Common myeloid progenitor, CD34-positive (primary cell): ENCODE measurements at regions of chr9 and their contacts with region 1.

Region 1: GRCh38 chr9:121023064-121023463 is 27.0 kb downstream of the C5 start:
- DNase-seq: peak; percentile 8 to 12 (median 11)
- H3K4me3 ChIP-seq: no peak overlapping the region
- H3K27ac ChIP-seq: no peak overlapping the region
- H3K4me1 ChIP-seq: no peaks in the 10 kb centered on the region
- H3K27me3 ChIP-seq: no peaks in the 10 kb centered on the region

Region 2: GRCh38 chr9:121038804-121039203 is 15.7 kb after region 1 on chr9:
- CTCF ChIA-PET with region 1: interaction called, 12 read pairs
- POLR2A ChIA-PET with region 1: no interaction called
- DNase-seq: no peak
- H3K4me3 ChIP-seq: no peak overlapping the region
- H3K27ac ChIP-seq: no peak overlapping the region
- H3K4me1 ChIP-seq: no peaks in the 10 kb centered on the region
- H3K27me3 ChIP-seq: no peaks in the 10 kb centered on the region

Region 3: DNA sequence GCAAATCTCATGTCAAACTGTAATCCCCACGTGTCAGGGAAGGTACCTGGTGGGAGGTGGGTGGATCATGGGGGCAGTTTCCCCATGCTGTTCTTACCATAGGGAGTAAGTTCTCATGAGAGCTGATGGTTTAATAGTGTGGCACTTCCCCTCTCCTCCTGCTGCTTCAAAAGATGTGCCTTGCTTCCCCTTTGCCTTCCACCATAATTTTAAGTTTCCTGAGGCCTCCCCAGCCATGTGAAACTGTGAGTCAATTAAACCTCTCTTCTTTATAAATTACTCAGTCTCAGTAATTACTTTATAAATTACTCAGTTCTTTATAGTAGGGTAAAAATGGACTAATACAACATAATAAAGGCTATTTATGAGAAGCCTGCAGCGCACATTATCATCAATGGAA is 44.6 kb after region 1 on chr9:
- CTCF ChIA-PET with region 1: no interaction called
- POLR2A ChIA-PET with region 1: no interaction called
- DNase-seq: no peak
- H3K4me3 ChIP-seq: no peak overlapping the region
- H3K27ac ChIP-seq: no peak overlapping the region
- H3K4me1 ChIP-seq: peaks cover 2 to 18% (median 8%) of the 10 kb centered on the region in 4 experiments
- H3K27me3 ChIP-seq: no peaks in the 10 kb centered on the region